ENCODE measurements at regions of chr2 and their contacts with region 1.

Region 1: GRCh38 chr2:231642631-231643494 is 50.2 kb downstream of the TEX44 start:
- DNase-seq: peak; percentile 99
- H3K4me3 Mint-ChIP-seq: peak overlapping the region; percentile 59
- H3K27ac Mint-ChIP-seq: peak overlapping the region; percentile 97
- H3K4me1 Mint-ChIP-seq: peaks cover 30% of the 10 kb centered on the region
- H3K27me3 Mint-ChIP-seq: no peaks in the 10 kb centered on the region
- CTCF ChIP-seq: no peak

Region 2: GRCh38 chr2:231425811-231426728 is 216.8 kb before region 1 on chr2:
- CTCF ChIA-PET with region 1: no interaction called
- POLR2A ChIA-PET with region 1: no interaction called
- intact Hi-C with region 1: no loop called
- DNase-seq: peak; percentile 28
- H3K4me3 Mint-ChIP-seq: no peak overlapping the region
- H3K27ac Mint-ChIP-seq: no peak overlapping the region
- H3K4me1 Mint-ChIP-seq: no peaks in the 10 kb centered on the region
- H3K27me3 Mint-ChIP-seq: no peaks in the 10 kb centered on the region
- CTCF ChIP-seq: no peak

Region 3: GRCh38 chr2:231612179-231613053 is 30.4 kb before region 1 on chr2:
- CTCF ChIA-PET with region 1: interaction called, 20 read pairs
- POLR2A ChIA-PET with region 1: interaction called, 36 read pairs
- intact Hi-C with region 1: loop called (anchors 1 kb)
- DNase-seq: peak; percentile 95
- H3K4me3 Mint-ChIP-seq: peak overlapping the region; percentile 63
- H3K27ac Mint-ChIP-seq: peak overlapping the region; percentile 92
- H3K4me1 Mint-ChIP-seq: peaks cover 38% of the 10 kb centered on the region
- H3K27me3 Mint-ChIP-seq: no peaks in the 10 kb centered on the region
- CTCF ChIP-seq: peak; percentile 95

Region 4: DNA sequence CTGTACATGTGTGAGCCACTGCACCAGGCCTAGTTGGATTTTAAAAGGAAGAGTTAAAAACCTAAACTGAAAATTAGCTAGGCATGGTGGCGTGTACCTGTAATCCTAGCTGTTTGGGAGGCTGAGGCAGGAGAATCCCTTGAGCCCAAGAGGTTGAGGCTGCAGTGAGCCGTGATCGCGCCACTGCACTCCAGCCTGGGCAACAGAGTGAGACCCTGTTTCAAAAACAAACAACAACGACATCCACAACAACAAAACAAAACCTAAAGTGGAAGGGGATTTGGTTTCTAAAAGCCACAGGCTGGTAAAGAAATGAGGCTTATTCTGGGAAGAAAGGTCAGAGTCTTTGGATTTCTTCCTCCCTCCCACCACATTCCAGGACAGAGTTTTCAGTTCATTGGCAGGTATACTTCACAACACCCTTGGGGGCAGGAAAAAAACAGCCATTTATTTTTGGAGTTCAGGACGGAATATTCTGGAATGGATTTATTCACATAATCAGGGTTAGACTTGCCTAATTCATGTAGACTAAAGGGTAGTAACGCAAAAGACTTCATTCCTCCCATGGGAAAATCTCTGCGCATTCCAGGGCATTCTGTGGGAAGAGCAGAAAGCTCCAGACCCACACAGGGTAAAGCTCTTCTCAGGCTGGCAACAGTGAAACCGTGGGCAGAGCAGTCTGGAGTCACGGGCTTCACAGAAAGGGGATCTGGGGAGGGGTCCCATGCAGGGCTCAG is 15.3 kb before region 1 on chr2:
- CTCF ChIA-PET with region 1: interaction called, 4 read pairs
- POLR2A ChIA-PET with region 1: interaction called, 18 read pairs
- intact Hi-C with region 1: no loop called
- DNase-seq: no peak
- H3K4me3 Mint-ChIP-seq: no peak overlapping the region
- H3K27ac Mint-ChIP-seq: no peak overlapping the region
- H3K4me1 Mint-ChIP-seq: no peaks in the 10 kb centered on the region
- H3K27me3 Mint-ChIP-seq: no peaks in the 10 kb centered on the region
- CTCF ChIP-seq: no peak

Region 5: DNA sequence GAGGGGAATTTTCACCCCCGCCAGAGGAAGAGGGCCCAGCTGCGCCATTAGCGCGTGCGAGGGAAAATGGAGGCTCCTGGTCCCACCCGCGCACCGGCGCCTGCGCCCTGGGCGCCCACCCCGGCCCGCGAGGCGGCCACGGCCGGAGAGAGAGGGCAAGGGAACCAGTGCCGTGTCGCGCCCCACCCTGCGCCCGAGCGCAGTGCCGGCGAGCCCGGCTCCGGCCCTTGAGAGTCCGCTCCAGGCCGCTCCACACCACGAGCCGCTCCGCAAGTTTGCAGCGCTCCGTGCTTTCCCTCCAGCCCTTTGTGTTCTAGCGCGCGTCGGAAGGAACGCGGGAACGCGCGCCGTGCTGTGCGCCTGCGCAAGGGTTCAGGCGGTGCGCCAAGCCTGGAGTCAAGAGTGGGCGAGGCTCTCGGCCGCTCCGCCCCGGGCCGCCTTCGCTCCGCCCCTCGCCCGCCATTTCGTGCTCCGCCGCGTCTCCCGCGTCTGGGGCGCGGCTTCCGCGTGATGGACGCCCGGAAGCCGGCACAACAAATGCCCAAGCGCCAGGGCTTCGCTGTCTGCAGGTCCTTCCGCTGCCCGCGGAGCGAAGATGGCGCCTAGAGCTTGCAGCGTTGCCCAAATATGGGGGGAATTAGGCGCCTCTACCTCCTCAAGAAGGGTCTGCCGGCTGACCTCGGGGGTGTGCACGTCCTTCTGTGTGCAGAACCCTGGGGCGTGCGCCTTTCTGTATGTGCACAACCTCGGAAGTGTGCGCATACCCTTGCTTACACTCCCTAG is 19.4 kb after region 1 on chr2:
- CTCF ChIA-PET with region 1: interaction called, 4 read pairs
- POLR2A ChIA-PET with region 1: interaction called, 11 read pairs
- intact Hi-C with region 1: no loop called
- DNase-seq: peak; percentile 97
- H3K4me3 Mint-ChIP-seq: peak overlapping the region; percentile 64
- H3K27ac Mint-ChIP-seq: peak overlapping the region; percentile 57
- H3K4me1 Mint-ChIP-seq: no peaks in the 10 kb centered on the region
- H3K27me3 Mint-ChIP-seq: no peaks in the 10 kb centered on the region
- CTCF ChIP-seq: no peak

Region 6: DNA sequence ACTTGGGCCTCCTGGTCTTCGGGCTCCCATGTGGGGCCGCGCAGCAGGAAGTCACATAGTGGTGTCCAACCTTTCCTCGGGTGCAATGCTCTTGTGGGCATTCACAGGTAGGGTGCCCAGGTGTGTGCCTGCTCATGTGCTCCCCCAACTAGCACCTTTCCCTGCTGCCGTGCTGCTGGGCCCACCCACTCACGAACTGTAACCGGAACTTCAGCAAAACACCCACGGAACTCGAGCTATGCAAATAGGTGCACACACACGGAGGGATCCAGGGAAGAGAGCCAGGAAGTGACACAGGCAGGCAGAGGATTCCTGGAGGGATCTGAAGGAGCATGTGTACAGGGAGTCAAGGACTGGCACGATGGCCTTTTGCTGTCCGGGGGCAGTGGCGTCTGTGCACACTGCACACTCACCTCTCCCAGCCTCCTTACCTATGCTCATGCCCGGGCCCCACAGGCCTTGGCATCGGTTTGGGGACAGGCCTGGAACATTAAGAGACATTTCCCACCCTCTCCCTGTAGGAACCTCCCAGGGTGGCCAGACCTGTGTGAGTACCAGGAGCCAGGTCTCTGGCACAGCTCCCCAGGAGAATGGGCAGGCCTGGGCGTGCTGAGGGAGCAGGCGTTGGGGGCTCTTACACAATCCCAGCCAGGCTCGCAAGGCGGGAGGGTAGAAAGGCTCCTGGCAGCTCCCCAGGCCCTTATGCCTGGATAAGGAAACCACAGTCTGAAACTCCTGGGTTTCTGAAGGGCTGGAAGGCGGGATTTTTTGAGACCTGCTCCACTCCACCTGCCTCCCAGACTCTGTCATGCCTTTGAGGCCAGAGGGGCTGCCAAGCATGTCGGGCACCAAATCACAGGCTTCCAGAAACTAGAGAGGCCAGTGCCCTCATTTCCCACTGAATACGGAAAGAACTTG is 58.9 kb after region 1 on chr2:
- CTCF ChIA-PET with region 1: interaction called, 3 read pairs
- POLR2A ChIA-PET with region 1: interaction called, 13 read pairs
- intact Hi-C with region 1: no loop called
- DNase-seq: peak; percentile 98
- H3K4me3 Mint-ChIP-seq: peak overlapping the region; percentile 58
- H3K27ac Mint-ChIP-seq: peak overlapping the region; percentile 71
- H3K4me1 Mint-ChIP-seq: peaks cover 11% of the 10 kb centered on the region
- H3K27me3 Mint-ChIP-seq: no peaks in the 10 kb centered on the region
- CTCF ChIP-seq: no peak

Region 7: DNA sequence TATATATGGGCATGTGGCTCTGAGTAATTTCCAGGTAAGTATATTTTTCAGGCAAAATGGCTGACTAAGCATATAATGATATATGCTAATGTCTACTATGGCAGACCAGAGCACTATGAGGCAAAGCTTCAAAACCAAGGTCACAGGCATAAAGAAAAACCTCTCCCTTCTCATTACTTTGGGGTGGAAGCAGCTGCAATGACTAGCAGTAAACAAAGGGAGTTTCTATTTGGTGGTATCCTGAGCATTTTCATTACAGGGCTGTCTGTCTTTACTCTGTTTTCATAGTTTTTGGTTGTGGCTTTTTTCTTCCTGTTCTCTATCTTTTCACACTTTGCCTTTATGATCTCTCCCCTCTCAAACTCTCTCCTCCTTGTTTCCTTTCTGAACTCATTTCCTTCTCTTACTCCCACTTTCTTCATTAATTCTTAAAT is 122.7 kb after region 1 on chr2:
- CTCF ChIA-PET with region 1: no interaction called
- POLR2A ChIA-PET with region 1: no interaction called
- intact Hi-C with region 1: no loop called
- DNase-seq: no peak
- H3K4me3 Mint-ChIP-seq: no peak overlapping the region
- H3K27ac Mint-ChIP-seq: no peak overlapping the region
- H3K4me1 Mint-ChIP-seq: peaks cover 3% of the 10 kb centered on the region
- H3K27me3 Mint-ChIP-seq: no peaks in the 10 kb centered on the region
- CTCF ChIP-seq: no peak

Region 8: DNA sequence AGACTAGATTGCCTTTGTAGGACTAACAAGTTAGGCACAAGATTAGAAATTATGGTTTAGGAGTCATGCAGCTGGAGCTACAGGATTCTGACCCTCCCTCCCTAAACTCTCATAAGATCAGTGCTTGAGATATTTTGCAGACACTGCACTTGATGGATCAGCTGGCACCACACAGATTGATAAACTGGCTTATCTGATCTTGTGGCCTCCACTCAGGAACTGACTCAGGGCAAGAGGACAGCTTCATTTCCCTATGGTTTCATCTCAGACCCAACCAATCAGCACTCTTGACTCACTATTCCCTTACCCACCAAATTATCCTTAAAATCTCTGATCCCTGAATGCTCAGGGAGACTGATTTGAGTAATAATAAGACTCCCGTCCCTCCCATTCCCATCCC is 471.0 kb after region 1 on chr2:
- CTCF ChIA-PET with region 1: no interaction called
- POLR2A ChIA-PET with region 1: no interaction called
- intact Hi-C with region 1: no loop called
- DNase-seq: no peak
- H3K4me3 Mint-ChIP-seq: no peak overlapping the region
- H3K27ac Mint-ChIP-seq: no peak overlapping the region
- H3K4me1 Mint-ChIP-seq: no peaks in the 10 kb centered on the region
- H3K27me3 Mint-ChIP-seq: no peaks in the 10 kb centered on the region
- CTCF ChIP-seq: no peak